OCI-LY7 (cell line): ENCODE measurements at regions of chr13 and their contacts with region 1.

Region 1: DNA sequence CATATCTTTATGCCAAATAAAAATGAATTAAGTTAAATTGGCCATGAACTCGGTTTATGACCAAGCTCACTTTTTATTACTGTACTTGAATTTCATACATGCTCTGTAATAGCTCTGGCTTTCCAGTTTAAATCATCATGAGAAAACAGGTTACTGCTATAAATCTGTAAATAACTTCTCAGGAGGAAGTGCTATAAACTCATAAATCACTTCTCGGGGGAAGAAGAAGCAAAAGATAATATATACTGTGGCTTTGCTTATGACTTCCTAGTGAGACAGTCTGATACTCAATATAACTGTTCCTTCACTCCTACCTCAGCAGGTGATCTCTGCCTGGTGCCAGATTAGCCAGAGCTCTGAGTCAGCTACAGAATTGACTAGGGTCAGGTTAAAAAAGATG is 12.5 kb downstream of the SUPT20H start:
- DNase-seq: no peak
- H3K4me3 ChIP-seq: no peak overlapping the region
- H3K27ac ChIP-seq: no peak overlapping the region
- H3K4me1 ChIP-seq: peaks cover 4% of the 10 kb centered on the region
- CTCF ChIP-seq: no peak

Region 2: GRCh38 chr13:37011002-37011401 is 36.0 kb before region 1 on chr13:
- CTCF ChIA-PET with region 1: no interaction called
- POLR2A ChIA-PET with region 1: interaction called, 10 read pairs
- intact Hi-C with region 1: no loop called
- DNase-seq: no peak
- H3K4me3 ChIP-seq: no peak overlapping the region
- H3K27ac ChIP-seq: no peak overlapping the region
- H3K4me1 ChIP-seq: peaks cover 3% of the 10 kb centered on the region
- CTCF ChIP-seq: no peak

Region 3: DNA sequence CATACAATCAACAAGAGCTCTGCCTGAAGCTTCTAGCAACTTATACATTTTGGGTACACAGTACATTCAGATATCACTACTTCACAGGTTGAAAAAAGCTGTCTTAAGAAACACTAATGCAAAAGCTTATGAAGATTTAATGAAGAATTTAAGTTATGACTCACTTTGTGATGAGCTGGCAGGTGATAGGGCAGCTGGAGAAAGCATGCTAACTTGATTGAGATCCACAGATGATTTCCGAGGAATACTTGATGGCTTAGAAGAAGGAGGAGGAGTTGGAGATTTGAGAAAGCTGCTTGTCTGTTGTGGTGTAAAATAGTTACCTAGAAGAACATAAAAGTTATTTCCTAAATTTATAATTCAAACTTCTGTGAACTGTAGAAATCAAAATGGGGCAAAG is 23.2 kb before region 1 on chr13:
- CTCF ChIA-PET with region 1: no interaction called
- POLR2A ChIA-PET with region 1: interaction called, 13 read pairs
- intact Hi-C with region 1: no loop called
- DNase-seq: no peak
- H3K4me3 ChIP-seq: no peak overlapping the region
- H3K27ac ChIP-seq: no peak overlapping the region
- H3K4me1 ChIP-seq: no peaks in the 10 kb centered on the region
- CTCF ChIP-seq: no peak

Region 4: GRCh38 chr13:37029617-37030016 is 17.4 kb before region 1 on chr13:
- CTCF ChIA-PET with region 1: no interaction called
- POLR2A ChIA-PET with region 1: interaction called, 13 read pairs
- intact Hi-C with region 1: no loop called
- DNase-seq: no peak
- H3K4me3 ChIP-seq: no peak overlapping the region
- H3K27ac ChIP-seq: no peak overlapping the region
- H3K4me1 ChIP-seq: no peaks in the 10 kb centered on the region
- CTCF ChIP-seq: no peak